HepG2 (cell line): ENCODE measurements at regions of chr20 and their contacts with region 1.

Region 1: DNA sequence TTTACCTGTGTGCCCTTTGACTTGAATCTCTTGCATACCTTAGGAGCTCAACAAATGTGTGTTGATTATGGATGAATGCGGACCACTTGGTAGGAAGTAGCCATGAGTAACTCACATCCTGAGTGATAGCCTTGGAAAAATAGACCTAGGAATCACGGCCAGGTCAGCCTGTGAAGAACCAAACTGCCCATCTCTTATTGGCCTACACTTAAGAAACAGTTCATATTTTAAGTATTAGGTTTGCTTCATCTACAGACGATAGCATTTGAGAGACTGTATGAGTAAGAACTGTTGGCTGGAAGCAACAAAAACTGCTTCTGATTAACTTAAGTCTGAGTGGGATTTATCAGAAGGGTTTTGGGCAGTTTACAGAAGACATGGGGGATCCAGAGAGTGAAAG is 320.1 kb upstream of the PRND start:
- DNase-seq: no peak
- ATAC-seq: no peak
- H3K4me3 ChIP-seq: no peak overlapping the region
- H3K27ac ChIP-seq: no peak overlapping the region
- H3K4me1 ChIP-seq: no peaks in the 10 kb centered on the region
- H3K27me3 ChIP-seq: no peaks in the 10 kb centered on the region
- CTCF ChIP-seq: no peak
- EP300 ChIP-seq: no peak
- POLR2A ChIP-seq: no peak
- RAD21 ChIP-seq: no peak

Region 2: GRCh38 chr20:4318891-4319290 is 82.7 kb before region 1 on chr20:
- CTCF ChIA-PET with region 1: no interaction called
- POLR2A ChIA-PET with region 1: no interaction called
- in situ Hi-C with region 1: no loop called
- intact Hi-C with region 1: loop called (anchors 10 kb)
- DNase-seq: no peak
- ATAC-seq: no peak
- H3K4me3 ChIP-seq: no peak overlapping the region
- H3K27ac ChIP-seq: no peak overlapping the region
- H3K4me1 ChIP-seq: no peaks in the 10 kb centered on the region
- H3K27me3 ChIP-seq: no peaks in the 10 kb centered on the region; a peak in 2 of 5 replicates
- CTCF ChIP-seq: no peak
- EP300 ChIP-seq: no peak
- POLR2A ChIP-seq: no peak
- RAD21 ChIP-seq: no peak

Region 3: DNA sequence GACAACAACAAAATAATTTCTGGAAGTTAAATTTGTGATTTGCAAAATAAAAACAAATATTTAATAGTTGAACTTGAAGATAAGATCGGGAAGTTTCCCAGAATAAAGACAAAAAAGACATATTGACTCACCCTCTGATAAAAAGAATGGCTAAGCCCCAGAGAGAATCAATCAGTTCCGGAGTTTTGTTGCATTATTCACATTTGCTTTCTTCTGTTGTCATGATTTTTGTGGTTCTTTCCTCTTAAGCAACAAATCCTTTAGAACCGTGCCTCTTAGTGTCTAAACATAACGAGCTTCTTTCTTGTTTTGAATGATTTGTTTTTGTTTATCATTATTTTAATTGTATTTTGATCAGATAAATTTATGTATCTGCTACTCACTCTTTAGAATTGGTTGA is 17.6 kb before region 1 on chr20:
- CTCF ChIA-PET with region 1: no interaction called
- POLR2A ChIA-PET with region 1: no interaction called
- in situ Hi-C with region 1: no loop called
- intact Hi-C with region 1: no loop called
- DNase-seq: no peak
- ATAC-seq: no peak
- H3K4me3 ChIP-seq: no peak overlapping the region
- H3K27ac ChIP-seq: no peak overlapping the region
- H3K4me1 ChIP-seq: peaks cover 8% of the 10 kb centered on the region; the same call in 1 of the 2 replicates
- H3K27me3 ChIP-seq: peaks cover 0 to 18% of the 10 kb centered on the region in 2 experiments; a peak in 3 of 5 replicates
- CTCF ChIP-seq: no peak
- EP300 ChIP-seq: peak in 1 of 2 experiments; percentile 15; a peak in 1 of 4 replicates
- POLR2A ChIP-seq: no peak
- RAD21 ChIP-seq: no peak